ENCODE measurements at regions of chr18 and their contacts with region 1.

Region 1: DNA sequence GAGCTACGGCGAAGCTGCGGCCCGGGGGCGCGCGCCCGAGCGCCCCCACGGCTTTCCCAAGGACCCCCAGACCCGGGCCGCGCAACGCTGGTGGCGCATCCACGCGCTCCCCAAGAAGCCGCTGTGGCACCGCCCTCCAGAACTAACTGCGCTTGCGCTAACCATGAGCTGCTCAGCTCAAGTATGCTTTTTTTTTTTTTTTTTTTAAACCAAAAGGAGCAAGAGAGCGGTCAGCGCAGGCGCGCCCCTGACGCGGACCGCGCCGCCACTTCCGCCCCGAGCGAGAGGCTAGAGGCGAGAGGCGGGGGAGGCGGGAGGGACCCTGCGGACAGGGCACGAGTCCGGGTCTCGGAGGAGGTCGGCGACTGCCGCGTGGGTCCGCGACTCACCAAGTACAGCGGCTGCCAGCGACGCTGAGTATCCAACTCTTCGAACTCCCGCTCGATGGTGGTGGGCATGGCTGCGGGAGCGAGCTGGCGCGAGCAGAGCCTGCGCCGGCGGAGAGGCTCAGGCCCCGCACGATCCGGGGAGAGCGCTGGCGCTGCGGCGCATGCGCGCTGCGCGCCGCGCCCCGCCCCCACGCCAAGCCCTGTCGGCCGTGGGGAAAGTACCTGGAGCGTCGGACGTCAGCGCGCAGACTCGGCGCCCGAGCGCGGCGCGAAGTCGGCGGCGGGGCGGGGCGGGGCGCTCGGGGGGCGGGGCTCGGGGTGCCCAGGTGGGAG is at the start of gene PTPN2:
- DNase-seq: peak; percentile 92 to 95 (median 94)
- ATAC-seq: peak; percentile 91
- H3K4me3 ChIP-seq: peak within 1 kb of the TSS; percentile 89
- H3K4me3 Mint-ChIP-seq: peak within 1 kb of the TSS; percentile 91 to 98 (median 96)
- H3K27ac ChIP-seq: peak within 1 kb of the TSS; percentile 99
- H3K27ac Mint-ChIP-seq: peak within 1 kb of the TSS; percentile 93 to 99 (median 96)
- H3K4me1 ChIP-seq: peaks cover 31 to 33% of the 10 kb centered on the region in 2 donors
- H3K4me1 Mint-ChIP-seq: peaks cover 43 to 69% (median 60%) of the 10 kb centered on the region in 7 donors
- H3K27me3 ChIP-seq: no peaks in the 10 kb centered on the region
- H3K27me3 Mint-ChIP-seq: no peaks in the 10 kb centered on the region
- total RNA-seq, gene PTPN2: 55.8 to 82.2 (median 76.2) TPM

Region 2: DNA sequence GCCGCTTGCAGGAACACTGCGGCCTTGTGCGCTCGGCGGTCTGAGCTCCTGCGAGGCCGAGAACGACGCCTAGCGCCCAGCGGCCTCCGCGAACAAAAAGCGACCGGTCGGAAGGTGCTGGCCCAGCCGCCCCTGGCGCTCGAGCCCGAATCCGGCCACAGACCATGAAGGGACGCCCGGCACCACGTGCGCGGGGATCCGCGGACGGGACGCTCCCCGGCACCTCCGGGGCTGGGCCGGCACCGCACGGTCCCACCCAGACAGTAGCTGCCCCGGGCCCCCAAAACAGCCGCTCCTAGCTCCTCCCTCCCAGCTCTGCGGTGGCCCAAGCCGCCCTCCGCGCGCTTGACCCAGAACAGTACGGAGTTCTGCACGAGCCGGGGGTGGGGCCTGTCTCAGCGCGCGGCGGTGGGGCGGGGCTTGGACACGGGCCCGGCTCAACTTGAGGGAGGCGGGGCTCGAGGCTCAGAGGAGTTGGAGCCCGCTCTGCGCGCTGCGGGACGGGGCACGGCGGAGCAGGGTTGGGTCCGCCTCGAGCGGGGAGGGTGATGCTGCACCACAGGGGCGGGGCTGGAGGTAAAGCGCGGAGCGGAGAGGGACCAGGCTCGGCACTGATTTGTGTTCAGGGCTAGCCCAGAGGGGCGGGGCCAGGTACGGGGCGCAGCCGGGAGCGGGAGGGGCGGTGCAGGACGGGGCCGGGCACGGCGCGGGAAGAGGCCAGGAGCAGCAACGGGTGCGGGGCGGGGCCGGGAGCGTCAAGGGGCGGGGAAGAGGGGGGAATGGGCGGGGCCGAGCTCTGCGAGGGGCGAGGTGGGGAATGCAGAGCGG is 903.1 kb before region 1 on chr18:
- CTCF ChIA-PET with region 1: no interaction called
- POLR2A ChIA-PET with region 1: no interaction called
- intact Hi-C with region 1: loop called in 1 of 2 experiments (anchors 5 kb)
- DNase-seq: peak; percentile 86 to 98 (median 92)
- ATAC-seq: peak; percentile 95
- H3K4me3 ChIP-seq: peak overlapping the region; percentile 64
- H3K4me3 Mint-ChIP-seq: peak overlapping the region; percentile 62 to 89 (median 86)
- H3K27ac ChIP-seq: peak overlapping the region; percentile 56
- H3K27ac Mint-ChIP-seq: peak overlapping the region in 7 of 9 donors; percentile 26 to 80 (median 44)
- H3K4me1 ChIP-seq: peaks cover 0 to 5% of the 10 kb centered on the region in 2 donors
- H3K4me1 Mint-ChIP-seq: peaks cover 0 to 27% (median 13%) of the 10 kb centered on the region in 7 donors
- H3K27me3 ChIP-seq: no peaks in the 10 kb centered on the region
- H3K27me3 Mint-ChIP-seq: peaks cover 0 to 17% (median 0%) of the 10 kb centered on the region in 5 donors

Region 3: DNA sequence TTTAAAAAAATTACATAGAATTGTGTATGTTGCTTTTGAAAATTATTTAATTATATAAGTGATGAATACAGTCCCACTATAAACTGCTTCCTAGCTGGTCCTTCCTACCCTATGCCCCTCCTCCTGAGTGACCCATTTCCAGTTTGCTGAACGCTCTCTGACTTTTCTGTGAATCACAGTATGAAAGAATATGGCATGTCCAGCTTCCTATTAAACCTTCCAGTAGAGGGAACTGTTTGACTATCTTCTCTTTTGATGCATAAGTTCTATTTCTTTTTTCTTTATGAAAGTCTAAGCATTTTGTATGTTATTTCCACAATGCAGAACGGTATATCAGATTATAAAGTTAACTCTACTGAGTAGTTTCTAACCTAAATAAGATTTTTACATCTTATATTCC is 139.7 kb before region 1 on chr18:
- CTCF ChIA-PET with region 1: interaction called, 5 read pairs
- POLR2A ChIA-PET with region 1: no interaction called
- intact Hi-C with region 1: loop called in 1 of 2 experiments (anchors 5 kb)
- DNase-seq: peak in 5 of 9 donors; percentile 13 to 38 (median 22)
- ATAC-seq: peak; percentile 68
- H3K4me3 ChIP-seq: no peak overlapping the region
- H3K4me3 Mint-ChIP-seq: no peak overlapping the region
- H3K27ac ChIP-seq: no peak overlapping the region
- H3K27ac Mint-ChIP-seq: no peak overlapping the region
- H3K4me1 ChIP-seq: no peaks in the 10 kb centered on the region
- H3K4me1 Mint-ChIP-seq: peaks cover 0 to 6% (median 5%) of the 10 kb centered on the region in 7 donors
- H3K27me3 ChIP-seq: no peaks in the 10 kb centered on the region
- H3K27me3 Mint-ChIP-seq: no peaks in the 10 kb centered on the region

Region 4: DNA sequence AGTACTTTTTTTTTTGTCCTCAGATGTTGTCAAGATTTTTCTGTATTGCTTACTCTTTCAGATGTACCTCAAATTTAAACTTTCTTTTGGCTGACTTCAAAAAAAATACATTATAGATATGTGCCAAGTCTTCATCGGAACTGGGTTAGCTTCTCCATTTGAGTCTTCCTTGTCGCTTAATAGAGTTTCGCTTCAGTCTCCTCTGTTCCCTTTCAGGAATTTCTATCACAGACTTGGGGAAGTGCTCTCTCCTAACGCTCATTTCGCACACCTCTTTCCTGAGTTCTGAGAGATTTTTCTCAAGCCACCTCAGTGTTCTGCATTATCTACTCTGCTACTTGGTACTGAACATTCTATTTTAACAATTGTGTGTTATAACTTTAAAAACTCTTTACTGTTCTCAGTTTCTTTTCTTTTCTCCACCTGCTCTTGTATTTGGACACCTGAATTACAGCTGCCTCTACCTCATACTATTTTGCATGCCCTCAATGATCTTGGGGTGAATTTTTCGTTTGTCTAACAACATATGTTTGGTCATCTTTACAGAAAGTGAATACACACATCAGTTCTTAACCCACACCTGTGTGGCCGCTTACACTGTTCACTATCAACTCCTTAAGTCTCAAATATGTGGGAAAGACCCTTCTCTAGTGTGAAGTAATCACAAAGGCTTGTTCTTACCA is 16.3 kb before region 1 on chr18:
- CTCF ChIA-PET with region 1: interaction called, 3 read pairs
- POLR2A ChIA-PET with region 1: interaction called, 6 read pairs
- intact Hi-C with region 1: loop called in 1 of 2 experiments (anchors 2 kb)
- DNase-seq: no peak
- ATAC-seq: no peak
- H3K4me3 ChIP-seq: no peak overlapping the region
- H3K4me3 Mint-ChIP-seq: peak overlapping the region in 1 of 10 donors; percentile 0
- H3K27ac ChIP-seq: no peak overlapping the region
- H3K27ac Mint-ChIP-seq: peak overlapping the region in 2 of 9 donors; percentile 5 to 9
- H3K4me1 ChIP-seq: peaks cover 3 to 4% of the 10 kb centered on the region in 2 donors
- H3K4me1 Mint-ChIP-seq: peaks cover 21 to 57% (median 42%) of the 10 kb centered on the region in 7 donors
- H3K27me3 ChIP-seq: no peaks in the 10 kb centered on the region
- H3K27me3 Mint-ChIP-seq: no peaks in the 10 kb centered on the region

Region 5: DNA sequence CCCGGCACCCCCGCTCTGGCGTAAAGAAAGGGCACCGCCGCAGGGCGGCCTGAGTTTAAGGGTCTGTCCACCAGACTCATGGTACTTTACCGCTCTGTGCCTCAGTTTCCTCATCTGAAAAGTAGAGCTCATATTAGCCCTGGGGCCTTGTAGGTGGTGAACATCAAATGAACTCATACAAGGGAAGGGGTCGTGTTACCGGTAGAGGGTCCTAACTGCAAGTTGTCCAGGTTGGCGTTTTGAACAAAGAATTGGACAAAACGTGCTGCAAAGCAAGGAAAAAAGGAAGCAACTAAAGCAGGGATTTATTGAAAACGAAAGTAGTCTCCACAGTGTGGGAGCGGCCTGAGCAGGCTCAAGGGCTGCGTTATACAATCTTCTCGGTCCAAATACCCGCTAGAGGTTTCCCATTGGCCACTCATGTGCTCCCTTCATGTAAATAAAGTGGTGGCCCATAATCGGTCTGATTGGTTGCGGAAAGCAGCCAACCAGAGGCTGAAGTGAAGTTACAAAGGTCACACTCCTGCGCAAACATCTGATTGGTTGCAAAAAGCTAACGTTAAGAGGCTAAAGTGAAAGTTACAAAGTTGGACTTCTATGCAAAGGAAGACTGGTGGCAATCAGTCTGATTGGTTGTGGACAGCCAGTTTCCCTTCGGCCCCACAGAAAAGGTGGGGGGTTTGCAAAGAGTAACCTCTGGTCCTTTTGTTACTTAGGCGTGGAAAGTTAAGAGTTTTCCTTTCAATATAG is 254.0 kb after region 1 on chr18:
- CTCF ChIA-PET with region 1: no interaction called
- POLR2A ChIA-PET with region 1: no interaction called
- intact Hi-C with region 1: loop called (anchors 1 to 5 kb)
- DNase-seq: peak; percentile 26 to 86 (median 77)
- ATAC-seq: peak; percentile 94
- H3K4me3 ChIP-seq: peak overlapping the region; percentile 83
- H3K4me3 Mint-ChIP-seq: peak overlapping the region; percentile 92 to 100 (median 99)
- H3K27ac ChIP-seq: peak overlapping the region; percentile 75
- H3K27ac Mint-ChIP-seq: peak overlapping the region; percentile 93 to 98 (median 97)
- H3K4me1 ChIP-seq: peaks cover 0 to 7% of the 10 kb centered on the region in 2 donors
- H3K4me1 Mint-ChIP-seq: peaks cover 12 to 32% (median 28%) of the 10 kb centered on the region in 7 donors
- H3K27me3 ChIP-seq: no peaks in the 10 kb centered on the region
- H3K27me3 Mint-ChIP-seq: peaks cover 0 to 22% (median 0%) of the 10 kb centered on the region in 5 donors

Region 6: DNA sequence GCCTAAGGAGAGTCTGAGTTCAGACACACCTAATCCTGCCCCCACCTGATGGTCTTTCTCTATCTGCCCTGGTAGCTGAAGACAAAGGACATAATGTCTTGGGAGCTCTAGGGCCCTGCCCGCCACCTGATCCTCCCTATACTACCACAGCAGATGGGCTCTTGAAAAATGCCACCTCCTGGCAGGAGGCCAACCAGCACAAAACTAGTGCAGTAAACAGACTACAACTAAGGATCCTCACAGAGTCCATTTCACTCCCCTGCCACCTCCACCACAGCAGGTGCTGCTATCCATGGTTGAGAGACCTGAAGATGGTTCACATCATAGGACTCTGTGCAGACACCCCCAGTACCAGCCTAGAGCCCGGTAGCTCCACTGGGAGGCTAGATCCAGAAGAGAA is 282.2 kb after region 1 on chr18:
- CTCF ChIA-PET with region 1: no interaction called
- POLR2A ChIA-PET with region 1: no interaction called
- intact Hi-C with region 1: no loop called
- DNase-seq: no peak
- ATAC-seq: no peak
- H3K4me3 ChIP-seq: no peak overlapping the region
- H3K4me3 Mint-ChIP-seq: no peak overlapping the region
- H3K27ac ChIP-seq: no peak overlapping the region
- H3K27ac Mint-ChIP-seq: no peak overlapping the region
- H3K4me1 ChIP-seq: no peaks in the 10 kb centered on the region
- H3K4me1 Mint-ChIP-seq: no peaks in the 10 kb centered on the region
- H3K27me3 ChIP-seq: no peaks in the 10 kb centered on the region
- H3K27me3 Mint-ChIP-seq: peaks cover 0 to 45% (median 12%) of the 10 kb centered on the region in 5 donors